GM10248 (cell line): ENCODE measurements at regions of chr3 and their contacts with region 1.

Region 1: GRCh38 chr3:171772427-171773056 is 37.7 kb downstream of the PLD1 start:
- DNase-seq: peak; percentile 58
- CTCF ChIP-seq: peak; percentile 72

Region 2: DNA sequence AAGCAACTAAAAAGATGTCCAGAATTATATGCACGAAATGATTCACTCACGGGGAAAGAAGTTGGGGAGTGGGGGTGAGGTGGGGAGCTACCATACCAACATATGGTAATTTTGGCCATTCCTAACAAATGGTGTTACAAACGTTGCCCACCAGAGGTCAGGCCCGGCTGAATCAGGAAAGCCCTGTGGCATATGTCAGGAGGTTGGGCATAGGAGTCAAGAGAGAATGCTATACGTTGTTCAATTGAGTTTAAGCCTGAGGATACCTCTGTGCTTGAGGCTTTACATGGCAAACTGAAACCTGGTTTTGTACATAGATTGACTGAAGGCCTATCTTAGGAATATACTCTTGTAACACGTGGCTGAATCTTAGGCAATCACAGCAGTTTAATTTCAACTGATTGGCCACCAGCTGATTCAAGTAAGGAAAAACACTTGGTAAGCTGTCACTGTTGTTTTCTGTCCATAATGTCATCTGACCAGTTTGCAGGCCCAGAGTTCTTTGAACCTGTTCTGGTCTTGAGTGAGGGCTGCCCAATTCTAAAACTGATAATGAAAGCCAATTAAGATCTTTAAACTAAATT is 722.6 kb before region 1 on chr3:
- CTCF ChIA-PET with region 1: interaction called, 23 read pairs
- POLR2A ChIA-PET with region 1: no interaction called
- DNase-seq: peak; percentile 54
- CTCF ChIP-seq: peak; percentile 55

Region 3: GRCh38 chr3:171526869-171527268 is 245.7 kb before region 1 on chr3:
- CTCF ChIA-PET with region 1: no interaction called
- POLR2A ChIA-PET with region 1: no interaction called
- DNase-seq: no peak
- CTCF ChIP-seq: no peak

Region 4: DNA sequence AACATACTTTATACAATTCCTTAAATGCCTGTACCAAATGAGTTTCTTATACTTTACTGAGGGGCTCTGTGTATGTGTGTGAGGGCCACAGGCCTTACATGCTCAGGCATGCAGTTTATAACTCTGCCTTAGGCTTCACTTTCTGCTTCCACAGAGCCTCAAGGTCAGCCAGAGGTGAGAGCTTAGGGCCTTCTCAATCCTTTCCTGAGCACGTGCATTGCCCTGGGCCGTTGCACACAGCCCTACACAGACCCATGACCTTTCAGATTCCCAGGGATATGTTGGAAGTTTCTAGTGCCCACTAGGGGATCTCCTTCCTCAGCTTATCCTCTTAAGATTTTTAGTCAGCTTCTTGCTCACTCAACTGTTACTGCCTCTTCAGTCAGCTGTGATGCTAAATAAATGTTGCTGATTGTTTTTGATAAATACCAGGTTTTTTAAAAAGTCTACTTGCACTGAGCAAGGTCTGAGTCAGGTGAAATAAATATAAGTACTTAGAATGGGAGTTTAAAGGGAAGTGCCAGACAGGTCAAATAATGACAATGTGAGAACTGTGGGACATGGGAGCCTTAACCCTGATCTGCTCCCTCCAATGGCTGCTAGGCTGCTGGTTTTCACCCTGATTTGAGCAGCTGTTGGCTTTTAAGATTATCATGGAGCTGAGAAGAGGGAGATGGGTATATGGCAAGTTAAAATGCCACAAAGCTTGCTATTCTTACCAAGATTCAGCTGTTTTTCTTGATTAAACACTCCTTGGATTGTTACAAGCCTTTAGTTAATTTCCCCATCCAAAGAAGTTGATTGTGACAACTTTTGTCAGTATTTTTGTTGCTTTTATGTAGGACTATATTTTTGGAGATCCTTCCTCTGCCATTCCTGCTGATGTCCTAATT is 131.8 kb before region 1 on chr3:
- CTCF ChIA-PET with region 1: interaction called, 39 read pairs
- POLR2A ChIA-PET with region 1: no interaction called
- DNase-seq: no peak
- CTCF ChIP-seq: no peak

Region 5: DNA sequence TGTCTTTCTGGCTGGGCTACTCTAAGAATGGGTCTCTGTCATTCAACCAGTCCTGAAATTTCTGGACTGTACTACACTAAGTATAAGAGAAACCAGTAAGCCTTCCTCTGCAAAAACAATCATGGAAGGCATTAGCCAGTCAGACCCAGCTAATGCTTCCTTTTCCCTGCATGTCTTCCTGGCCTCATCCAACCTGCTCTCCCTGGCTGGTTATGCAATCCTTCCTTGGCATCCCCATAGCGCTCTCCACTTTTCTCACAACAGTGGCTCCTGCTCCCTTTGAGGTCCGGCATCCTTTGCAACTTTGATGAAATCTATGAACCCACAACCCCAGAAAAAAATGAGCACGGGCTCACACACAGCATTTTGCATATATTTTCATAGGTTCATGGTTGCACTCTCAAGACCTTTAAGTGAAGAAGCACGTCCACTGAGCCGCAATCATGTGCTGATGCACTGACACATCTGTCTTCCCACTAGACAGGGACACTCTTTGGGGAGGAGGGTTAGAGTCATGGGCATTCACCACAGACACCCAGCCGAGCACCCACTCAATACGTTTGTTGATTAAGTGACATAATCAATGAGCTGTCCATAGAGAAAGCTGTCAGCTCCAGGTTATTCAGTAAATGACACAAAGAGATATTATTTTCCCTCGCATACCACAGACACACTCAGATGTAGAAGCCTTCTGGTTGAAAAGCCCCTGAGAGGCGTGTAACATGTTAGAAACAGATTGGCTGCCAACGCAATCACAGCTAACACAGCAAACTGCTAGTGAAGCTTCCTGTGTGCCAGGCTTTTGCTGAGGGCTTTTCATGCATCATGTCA is 29.0 kb before region 1 on chr3:
- CTCF ChIA-PET with region 1: interaction called, 16 read pairs
- POLR2A ChIA-PET with region 1: no interaction called
- DNase-seq: no peak
- CTCF ChIP-seq: no peak

Region 6: DNA sequence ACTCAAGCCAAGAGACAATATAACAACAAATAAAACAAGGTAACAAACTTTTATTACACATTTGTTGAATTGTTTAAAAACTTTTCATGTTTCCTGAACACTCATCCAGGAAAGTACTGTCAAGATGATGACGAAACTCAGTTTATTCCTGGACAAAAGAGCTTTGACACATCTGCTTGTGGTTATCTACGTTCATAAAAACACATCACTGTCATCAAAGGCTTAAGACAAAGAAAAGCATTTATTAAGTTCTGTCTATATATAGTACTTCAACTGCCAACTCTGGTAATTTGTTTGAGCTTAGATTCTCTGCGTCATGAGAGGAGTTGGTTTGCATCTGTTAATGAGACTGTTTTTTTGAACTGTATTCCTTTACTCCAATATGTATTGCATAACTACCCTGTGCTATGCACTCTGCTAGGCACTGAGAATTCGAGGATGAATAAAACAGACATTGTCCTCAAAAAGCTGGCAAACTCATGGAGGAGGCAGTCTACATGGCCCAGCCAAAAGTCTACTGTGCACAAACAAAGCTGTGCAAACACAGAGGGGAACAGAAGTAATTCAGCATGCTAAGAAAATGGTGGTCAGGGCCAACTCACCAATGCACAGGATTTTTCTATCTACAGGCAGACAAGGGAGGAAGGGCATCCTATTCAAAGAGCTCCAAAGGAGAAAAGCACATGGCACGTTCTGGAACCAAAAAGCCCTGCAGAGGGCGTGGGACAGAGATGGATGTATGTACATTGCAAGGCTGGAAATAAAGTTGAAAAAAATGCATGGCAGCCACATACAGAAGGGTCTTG is 16.2 kb after region 1 on chr3:
- CTCF ChIA-PET with region 1: interaction called, 15 read pairs
- POLR2A ChIA-PET with region 1: no interaction called
- DNase-seq: no peak
- CTCF ChIP-seq: no peak

Region 7: DNA sequence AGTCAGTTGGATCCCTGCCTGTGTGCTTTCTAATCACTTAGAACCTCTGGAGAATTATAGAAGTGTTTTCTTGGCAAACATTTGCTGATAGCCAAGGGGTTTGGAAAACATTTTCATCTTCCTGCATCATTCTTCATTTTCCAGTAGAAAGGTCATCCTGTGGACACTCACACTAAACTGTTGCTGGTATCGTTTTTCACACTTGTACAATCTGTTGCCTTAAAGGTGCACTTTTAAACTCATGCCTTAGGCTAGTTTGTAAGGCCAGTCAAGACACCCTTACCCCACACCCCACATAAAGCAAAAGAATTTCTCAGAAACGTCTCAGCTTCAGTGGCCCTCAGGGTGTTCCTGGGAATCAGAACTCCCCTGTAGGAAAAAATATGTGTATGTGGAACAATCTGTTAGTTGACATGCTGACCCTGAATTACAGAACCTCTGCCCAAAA is 43.5 kb after region 1 on chr3:
- CTCF ChIA-PET with region 1: no interaction called
- POLR2A ChIA-PET with region 1: no interaction called
- DNase-seq: no peak
- CTCF ChIP-seq: no peak

Region 8: DNA sequence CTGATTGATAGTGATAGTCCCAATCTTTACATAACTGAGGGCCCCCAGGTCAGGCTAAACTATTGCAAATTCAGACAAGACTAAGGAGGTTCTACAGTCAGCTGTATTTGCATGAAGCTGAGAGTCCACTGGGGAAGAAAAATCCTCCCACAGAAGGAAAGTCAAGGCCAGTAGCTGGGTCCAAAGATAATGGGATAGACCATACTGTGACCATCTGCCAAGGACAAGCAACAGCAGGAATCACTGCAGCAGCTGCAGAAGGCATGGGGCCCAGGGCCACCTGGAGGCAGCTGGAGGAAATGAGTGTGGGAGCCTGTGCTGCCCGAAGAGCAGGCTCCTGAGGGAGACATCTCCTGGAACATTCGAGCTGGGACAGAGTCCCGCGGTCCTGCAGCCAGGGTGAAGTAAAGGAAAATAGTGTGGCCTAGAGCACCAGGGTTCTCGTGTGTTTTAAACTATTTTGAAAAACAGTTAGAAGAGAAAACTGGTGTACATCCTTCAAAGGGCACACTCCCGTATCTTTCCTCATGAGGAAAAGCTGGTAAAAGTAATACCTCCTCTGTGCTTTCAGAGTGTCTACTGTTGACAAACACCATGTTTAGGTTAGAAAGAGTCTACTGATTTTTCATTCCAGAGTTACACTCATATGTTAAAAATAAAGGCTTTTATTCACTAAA is 57.4 kb after region 1 on chr3:
- CTCF ChIA-PET with region 1: interaction called, 17 read pairs
- POLR2A ChIA-PET with region 1: no interaction called
- DNase-seq: peak; percentile 37
- CTCF ChIP-seq: peak; percentile 70